ENCODE measurements at regions of chr20 and their contacts with region 1.

Region 1: GRCh38 chr20:62937366-62938104 is 412 bp upstream of the GID8 start:
- DNase-seq: peak; percentile 96 to 98 (median 97)
- H3K4me3 ChIP-seq: peak overlapping the region; percentile 84 to 89
- H3K4me3 Mint-ChIP-seq: peak overlapping the region in 7 of 8 donors; percentile 91 to 99 (median 95)
- H3K27ac ChIP-seq: peak overlapping the region; percentile 86
- H3K27ac Mint-ChIP-seq: peak overlapping the region; percentile 92 to 98 (median 96)
- H3K4me1 ChIP-seq: peaks cover 71% of the 10 kb centered on the region
- H3K4me1 Mint-ChIP-seq: peaks cover 26 to 46% (median 37%) of the 10 kb centered on the region in 4 donors
- H3K27me3 ChIP-seq: no peaks in the 10 kb centered on the region
- H3K27me3 Mint-ChIP-seq: no peaks in the 10 kb centered on the region

Region 2: DNA sequence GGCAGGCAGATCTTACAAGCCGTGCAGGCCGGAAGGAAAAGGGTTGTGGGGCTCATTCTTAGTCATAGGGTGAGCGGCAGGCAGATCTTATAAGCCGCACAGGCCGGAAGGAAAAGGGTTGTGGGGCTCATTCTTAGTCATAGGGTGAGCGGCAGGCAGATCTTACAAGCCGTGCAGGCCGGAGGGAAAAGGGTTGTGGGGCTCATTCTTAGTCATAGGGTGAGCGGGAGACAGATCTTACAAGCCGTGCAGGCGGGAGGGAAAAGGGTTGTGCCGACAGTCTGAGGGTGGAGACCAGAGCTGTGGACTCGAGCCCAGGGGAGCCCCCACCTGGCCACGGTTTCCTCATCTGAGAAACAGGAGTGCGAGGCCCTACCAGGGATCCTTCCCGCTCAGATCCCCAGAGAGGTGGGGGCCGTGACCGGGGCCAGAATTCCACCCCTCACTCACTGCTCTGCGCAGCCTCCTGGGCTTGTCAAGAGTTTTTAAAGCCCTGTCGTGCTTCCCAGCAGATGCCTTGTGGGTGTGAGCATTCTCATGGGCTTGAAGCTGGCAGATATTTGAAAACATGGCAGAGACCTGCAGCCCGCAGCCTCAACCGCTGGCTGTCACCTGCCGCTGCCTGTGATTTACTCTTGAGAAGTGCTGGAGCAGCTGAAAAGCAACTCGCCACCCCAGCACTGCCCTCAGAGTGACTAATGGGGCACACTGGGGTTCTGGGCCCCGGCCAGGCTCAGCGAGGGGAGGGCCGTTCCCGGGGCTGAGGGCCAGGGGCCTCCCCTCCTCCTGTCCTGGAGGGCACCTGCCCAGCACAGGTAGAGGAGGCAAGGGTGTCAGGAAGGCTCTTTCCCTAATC is 197.0 kb before region 1 on chr20:
- CTCF ChIA-PET with region 1: no interaction called
- POLR2A ChIA-PET with region 1: no interaction called
- intact Hi-C with region 1: no loop called
- DNase-seq: peak; percentile 80 to 96 (median 85)
- H3K4me3 ChIP-seq: peak overlapping the region in 1 of 2 donors; percentile 63
- H3K4me3 Mint-ChIP-seq: peak overlapping the region; percentile 80 to 91 (median 88)
- H3K27ac ChIP-seq: peak overlapping the region; percentile 69
- H3K27ac Mint-ChIP-seq: peak overlapping the region; percentile 82 to 98 (median 93)
- H3K4me1 ChIP-seq: peaks cover 56% of the 10 kb centered on the region
- H3K4me1 Mint-ChIP-seq: peaks cover 20 to 58% (median 40%) of the 10 kb centered on the region in 4 donors
- H3K27me3 ChIP-seq: no peaks in the 10 kb centered on the region
- H3K27me3 Mint-ChIP-seq: peaks cover 0 to 4% of the 10 kb centered on the region in 2 donors

Region 3: DNA sequence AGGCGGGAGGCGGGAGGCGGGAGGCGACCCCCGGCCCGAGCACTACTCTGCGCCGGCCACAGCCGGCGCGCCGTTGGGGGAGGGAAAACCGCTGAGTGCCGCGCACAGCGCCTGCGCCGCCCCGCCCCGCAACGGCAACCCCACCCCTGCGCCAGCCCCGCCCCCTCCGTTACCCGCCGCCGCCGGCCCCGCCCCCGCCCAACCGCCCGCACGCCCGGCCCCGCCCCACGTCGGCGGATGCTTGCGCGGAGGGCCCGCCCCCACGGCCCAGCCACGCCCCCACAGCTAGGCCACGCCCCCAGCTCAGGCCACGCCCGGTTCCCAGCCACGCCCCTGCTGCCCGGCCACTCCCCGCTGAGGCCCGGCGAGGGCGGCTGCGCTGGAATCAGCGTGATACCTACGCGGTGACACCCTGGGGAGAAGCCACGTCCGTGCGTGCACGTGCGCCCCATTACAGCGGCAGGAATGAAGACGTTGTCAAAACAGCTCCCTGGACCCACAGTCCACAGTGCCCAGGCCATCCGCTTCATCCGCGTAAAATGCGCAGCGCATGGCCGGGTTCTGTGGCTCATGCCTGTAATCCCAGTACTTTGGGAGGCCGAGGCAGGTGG is 75.7 kb before region 1 on chr20 and contains the start of gene TCFL5:
- CTCF ChIA-PET with region 1: no interaction called
- POLR2A ChIA-PET with region 1: interaction called, 11 read pairs
- intact Hi-C with region 1: no loop called
- DNase-seq: peak; percentile 89 to 98 (median 92)
- H3K4me3 ChIP-seq: no peak within 1 kb of the TSS
- H3K4me3 Mint-ChIP-seq: peak within 1 kb of the TSS; percentile 68 to 80 (median 74)
- H3K27ac ChIP-seq: no peak within 1 kb of the TSS
- H3K27ac Mint-ChIP-seq: peak within 1 kb of the TSS; percentile 76 to 93 (median 81)
- H3K4me1 ChIP-seq: peaks cover 12% of the 10 kb centered on the region
- H3K4me1 Mint-ChIP-seq: peaks cover 10 to 17% (median 15%) of the 10 kb centered on the region in 4 donors
- H3K27me3 ChIP-seq: no peaks in the 10 kb centered on the region
- H3K27me3 Mint-ChIP-seq: peaks cover 0 to 2% of the 10 kb centered on the region in 2 donors
- total RNA-seq, gene TCFL5: 9.9 to 10.3 TPM

Region 4: GRCh38 chr20:62907384-62908317 is 29.9 kb before region 1 on chr20:
- CTCF ChIA-PET with region 1: interaction called, 4 read pairs
- POLR2A ChIA-PET with region 1: interaction called, 13 read pairs
- intact Hi-C with region 1: no loop called
- DNase-seq: peak in 2 of 5 donors; percentile 31 to 36
- H3K4me3 ChIP-seq: no peak overlapping the region
- H3K4me3 Mint-ChIP-seq: no peak overlapping the region
- H3K27ac ChIP-seq: no peak overlapping the region
- H3K27ac Mint-ChIP-seq: peak overlapping the region in 5 of 7 donors; percentile 29 to 68 (median 42)
- H3K4me1 ChIP-seq: no peaks in the 10 kb centered on the region
- H3K4me1 Mint-ChIP-seq: peaks cover 10 to 37% (median 16%) of the 10 kb centered on the region in 4 donors
- H3K27me3 ChIP-seq: no peaks in the 10 kb centered on the region
- H3K27me3 Mint-ChIP-seq: no peaks in the 10 kb centered on the region

Region 5: GRCh38 chr20:62921119-62921687 is 16.3 kb before region 1 on chr20:
- CTCF ChIA-PET with region 1: interaction called, 14 read pairs
- POLR2A ChIA-PET with region 1: interaction called, 126 read pairs
- intact Hi-C with region 1: loop called (anchors 1 kb)
- DNase-seq: peak; percentile 58 to 85 (median 62)
- H3K4me3 ChIP-seq: no peak overlapping the region
- H3K4me3 Mint-ChIP-seq: peak overlapping the region; percentile 72 to 92 (median 87)
- H3K27ac ChIP-seq: peak overlapping the region; percentile 36
- H3K27ac Mint-ChIP-seq: peak overlapping the region; percentile 82 to 95 (median 89)
- H3K4me1 ChIP-seq: peaks cover 90% of the 10 kb centered on the region
- H3K4me1 Mint-ChIP-seq: peaks cover 61 to 93% (median 77%) of the 10 kb centered on the region in 4 donors
- H3K27me3 ChIP-seq: no peaks in the 10 kb centered on the region
- H3K27me3 Mint-ChIP-seq: no peaks in the 10 kb centered on the region

Region 6: DNA sequence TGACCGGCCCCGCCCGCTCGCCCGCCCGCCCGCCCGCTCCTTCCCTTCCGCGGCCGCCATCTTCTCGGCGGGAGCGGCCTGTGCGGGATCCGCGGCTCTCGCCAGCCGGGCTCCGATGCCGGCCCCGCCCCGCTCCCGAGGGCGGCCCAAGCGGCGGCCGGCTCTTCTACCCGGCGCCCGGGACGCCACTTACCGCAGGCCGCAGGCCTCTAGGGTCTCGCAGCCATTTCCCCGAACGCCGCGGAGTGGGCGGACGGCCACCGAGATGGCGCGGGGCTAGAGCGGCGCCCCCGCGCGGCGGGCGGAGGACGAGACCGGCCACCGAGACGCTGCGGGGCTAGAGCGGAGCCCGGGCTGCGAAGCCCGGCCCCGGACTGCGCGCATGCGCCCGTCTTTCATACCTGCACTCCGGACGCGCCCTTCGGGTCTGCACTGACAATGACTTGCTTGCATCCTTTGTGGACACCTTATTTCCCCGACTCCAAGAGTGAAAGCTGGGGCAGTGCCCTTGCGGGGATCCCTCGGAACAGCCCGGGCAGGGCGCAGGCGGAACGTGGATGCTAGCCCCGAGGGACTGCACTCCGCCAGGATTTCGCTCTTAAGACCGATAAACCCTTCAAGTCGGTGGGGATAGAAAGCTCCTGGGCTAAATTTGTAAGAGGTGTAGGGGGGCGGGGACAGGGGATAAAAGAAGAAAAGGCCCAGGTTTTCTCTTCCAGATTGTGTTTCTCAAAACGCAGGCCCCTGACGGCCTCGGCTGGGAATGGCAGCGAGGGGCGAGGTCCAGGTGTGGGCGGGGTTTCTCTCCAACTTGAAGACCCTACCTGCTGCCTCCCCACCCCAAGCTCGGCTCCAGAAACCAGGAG is 11.1 kb before region 1 on chr20 and contains the start of gene DIDO1:
- CTCF ChIA-PET with region 1: interaction called, 8 read pairs
- POLR2A ChIA-PET with region 1: interaction called, 126 read pairs
- intact Hi-C with region 1: loop called (anchors 1 kb)
- DNase-seq: peak; percentile 88 to 91 (median 90)
- H3K4me3 ChIP-seq: peak within 1 kb of the TSS; percentile 87 to 88
- H3K4me3 Mint-ChIP-seq: peak within 1 kb of the TSS; percentile 91 to 97 (median 96)
- H3K27ac ChIP-seq: peak within 1 kb of the TSS; percentile 91
- H3K27ac Mint-ChIP-seq: peak within 1 kb of the TSS; percentile 89 to 97 (median 94)
- H3K4me1 ChIP-seq: peaks cover 78% of the 10 kb centered on the region
- H3K4me1 Mint-ChIP-seq: peaks cover 37 to 89% (median 63%) of the 10 kb centered on the region in 4 donors
- H3K27me3 ChIP-seq: no peaks in the 10 kb centered on the region
- H3K27me3 Mint-ChIP-seq: no peaks in the 10 kb centered on the region
- total RNA-seq, gene DIDO1: 127 to 129 TPM

Region 7: DNA sequence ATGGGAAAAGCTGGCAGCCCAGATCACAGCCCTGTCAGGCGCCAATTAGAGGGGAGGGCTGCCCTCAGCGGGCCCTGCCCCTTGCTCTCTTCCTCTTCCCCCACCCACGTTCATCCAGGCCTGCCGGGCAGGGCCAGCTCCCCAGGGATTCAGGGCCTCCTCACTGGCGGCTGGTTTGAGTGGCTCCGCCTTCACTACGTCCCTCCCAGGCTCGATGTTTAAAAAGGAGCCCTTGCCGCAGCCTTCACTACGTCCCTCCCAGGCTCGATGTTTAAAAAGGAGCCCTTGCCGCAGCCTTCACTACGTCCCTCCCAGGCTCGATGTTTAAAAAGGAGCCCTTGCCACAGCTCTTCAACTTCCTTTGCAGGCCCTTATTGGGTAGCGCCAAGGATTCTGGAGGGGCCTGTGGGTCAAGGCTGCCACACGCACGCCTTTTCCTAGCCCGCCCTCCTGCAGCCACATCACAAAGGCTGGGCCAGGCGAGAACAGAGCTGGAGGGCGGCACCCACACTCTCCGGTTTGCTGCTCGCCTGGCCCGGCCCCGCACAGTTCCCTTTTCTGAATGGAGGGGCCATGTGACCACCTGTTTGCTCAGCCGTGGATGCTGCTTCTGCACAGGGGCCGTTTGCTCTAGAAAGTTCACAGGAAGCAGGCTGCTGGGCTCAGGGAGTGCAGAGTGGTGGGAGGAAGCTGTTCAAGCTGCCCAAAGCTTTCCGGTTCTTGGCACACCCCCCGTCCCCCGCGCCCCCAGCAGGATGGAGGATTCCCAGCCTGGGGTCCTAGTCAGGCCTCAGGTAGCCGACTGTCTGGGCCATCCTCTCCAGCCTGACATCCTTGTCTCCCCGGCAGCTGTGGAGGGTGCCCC is 16.5 kb after region 1 on chr20:
- CTCF ChIA-PET with region 1: interaction called, 11 read pairs
- POLR2A ChIA-PET with region 1: interaction called, 66 read pairs
- intact Hi-C with region 1: loop called (anchors 1 kb)
- DNase-seq: peak; percentile 74 to 85 (median 77)
- H3K4me3 ChIP-seq: peak overlapping the region; percentile 17 to 27
- H3K4me3 Mint-ChIP-seq: peak overlapping the region; percentile 72 to 93 (median 83)
- H3K27ac ChIP-seq: peak overlapping the region; percentile 57
- H3K27ac Mint-ChIP-seq: peak overlapping the region; percentile 92 to 95 (median 93)
- H3K4me1 ChIP-seq: peaks cover 28% of the 10 kb centered on the region
- H3K4me1 Mint-ChIP-seq: peaks cover 11 to 31% (median 24%) of the 10 kb centered on the region in 4 donors
- H3K27me3 ChIP-seq: no peaks in the 10 kb centered on the region
- H3K27me3 Mint-ChIP-seq: no peaks in the 10 kb centered on the region

Region 8: DNA sequence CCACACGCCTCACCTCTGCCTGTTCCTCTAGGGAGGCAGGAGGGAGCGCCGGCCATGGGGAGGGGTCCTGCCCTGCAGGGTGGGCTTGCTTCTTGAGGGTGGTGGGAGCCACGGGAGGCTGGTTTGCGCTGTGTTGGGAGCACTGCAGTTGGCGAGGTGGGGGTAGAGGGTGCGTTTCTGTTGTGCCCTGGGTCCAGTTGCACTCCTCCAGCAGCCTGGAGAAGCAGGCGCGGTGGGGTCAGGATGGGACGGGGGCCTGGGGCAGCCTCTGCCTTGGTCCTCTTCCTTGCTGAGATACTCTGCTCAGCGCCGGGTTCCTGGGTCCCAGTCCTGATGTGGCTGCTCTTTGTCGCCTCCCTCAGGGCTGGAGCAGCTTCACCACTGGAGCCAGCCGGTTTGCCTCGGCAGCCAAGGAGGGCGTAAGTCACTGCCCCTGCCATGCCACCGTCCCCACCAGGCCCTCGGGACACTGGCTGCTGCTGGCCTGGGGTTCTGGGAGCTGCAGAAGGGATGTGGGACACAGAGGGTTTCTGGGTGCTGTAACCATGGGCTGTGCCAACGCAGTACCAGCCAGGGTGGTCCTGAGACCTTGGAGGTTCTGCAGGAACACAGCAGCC is 343.5 kb after region 1 on chr20:
- CTCF ChIA-PET with region 1: no interaction called
- POLR2A ChIA-PET with region 1: no interaction called
- intact Hi-C with region 1: no loop called
- DNase-seq: peak in 1 of 5 donors; percentile 7
- H3K4me3 ChIP-seq: no peak overlapping the region
- H3K4me3 Mint-ChIP-seq: no peak overlapping the region
- H3K27ac ChIP-seq: no peak overlapping the region
- H3K27ac Mint-ChIP-seq: no peak overlapping the region
- H3K4me1 ChIP-seq: no peaks in the 10 kb centered on the region
- H3K4me1 Mint-ChIP-seq: peaks cover 0 to 21% (median 1%) of the 10 kb centered on the region in 4 donors
- H3K27me3 ChIP-seq: no peaks in the 10 kb centered on the region
- H3K27me3 Mint-ChIP-seq: no peaks in the 10 kb centered on the region